ENCODE measurements at regions of chr7 and their contacts with region 1.

Region 1: GRCh38 chr7:143331179-143331820 is 15.4 kb downstream of the CLCN1 start:
- DNase-seq: peak; percentile 89
- H3K4me3 ChIP-seq: no peak overlapping the region
- H3K27ac ChIP-seq: peak overlapping the region; percentile 66
- H3K4me1 ChIP-seq: peaks cover 10% of the 10 kb centered on the region
- H3K27me3 ChIP-seq: no peaks in the 10 kb centered on the region
- CTCF ChIP-seq: no peak

Region 2: DNA sequence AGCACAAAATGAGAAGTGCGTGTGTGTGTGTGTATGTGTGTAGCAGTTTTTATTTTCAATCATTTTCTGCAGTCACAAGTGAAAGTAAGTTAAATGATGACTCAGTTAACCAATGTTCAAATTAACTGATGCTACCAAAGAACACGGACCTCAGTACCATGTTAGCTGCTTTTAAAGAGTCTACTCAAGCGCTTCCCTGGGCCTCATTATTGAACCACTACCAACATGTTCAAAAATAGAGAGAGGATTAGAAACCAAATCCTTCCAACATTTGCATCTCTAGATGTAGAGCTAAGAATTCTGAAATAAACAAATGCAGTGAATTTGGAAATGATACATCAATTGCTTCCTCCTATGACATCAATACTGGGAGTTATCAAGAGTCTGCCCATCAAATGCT is 148.3 kb before region 1 on chr7 and contains the start of gene TAS2R39:
- CTCF ChIA-PET with region 1: no interaction called
- dilution Hi-C with region 1: no loop called
- in situ Hi-C with region 1: no loop called
- intact Hi-C with region 1: no loop called
- DNase-seq: no peak
- H3K4me3 ChIP-seq: no peak within 1 kb of the TSS
- H3K27ac ChIP-seq: no peak within 1 kb of the TSS
- H3K4me1 ChIP-seq: no peaks in the 10 kb centered on the region
- H3K27me3 ChIP-seq: no peaks in the 10 kb centered on the region
- CTCF ChIP-seq: no peak
- total RNA-seq, gene TAS2R39: not detected

Region 3: GRCh38 chr7:143287935-143288826 is 43.1 kb before region 1 on chr7 and contains the start of gene CASP2:
- CTCF ChIA-PET with region 1: interaction called, 11 read pairs
- dilution Hi-C with region 1: no loop called
- in situ Hi-C with region 1: no loop called
- intact Hi-C with region 1: no loop called
- DNase-seq: peak; percentile 97
- H3K4me3 ChIP-seq: peak within 1 kb of the TSS; percentile 64 to 87 (median 78)
- H3K27ac ChIP-seq: peak within 1 kb of the TSS; percentile 86
- H3K4me1 ChIP-seq: peaks cover 41% of the 10 kb centered on the region
- H3K27me3 ChIP-seq: no peaks in the 10 kb centered on the region
- CTCF ChIP-seq: peak in 1 of 2 donors; percentile 34
- total RNA-seq, gene CASP2: 18.3 to 43.5 TPM

Region 4: GRCh38 chr7:143346018-143346417 is 14.7 kb after region 1 on chr7:
- CTCF ChIA-PET with region 1: no interaction called
- dilution Hi-C with region 1: no loop called
- in situ Hi-C with region 1: no loop called
- intact Hi-C with region 1: loop called (anchors 2 kb)
- DNase-seq: no peak
- H3K4me3 ChIP-seq: no peak overlapping the region
- H3K27ac ChIP-seq: no peak overlapping the region
- H3K4me1 ChIP-seq: peaks cover 4% of the 10 kb centered on the region
- H3K27me3 ChIP-seq: peaks cover 3% of the 10 kb centered on the region
- CTCF ChIP-seq: no peak

Region 5: DNA sequence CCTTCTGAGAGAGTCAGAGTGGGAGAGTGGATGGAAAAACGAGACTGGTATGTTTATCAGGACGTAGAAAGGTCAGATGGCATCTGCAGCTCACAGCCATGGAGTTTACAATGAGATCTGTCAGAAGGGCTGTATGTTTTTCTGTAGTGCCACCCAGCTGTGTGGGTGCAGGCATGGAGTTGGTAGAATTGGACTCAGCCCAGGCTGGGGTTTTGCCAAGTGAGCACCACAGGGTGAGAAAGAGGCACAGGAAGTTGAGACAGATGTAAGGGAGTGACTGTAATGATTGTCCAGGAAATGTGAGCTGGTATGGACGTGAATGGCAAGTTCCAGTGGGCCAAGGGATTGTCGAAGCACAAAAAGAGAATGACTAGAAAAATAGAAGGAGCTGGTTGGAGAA is 40.8 kb after region 1 on chr7:
- CTCF ChIA-PET with region 1: no interaction called
- dilution Hi-C with region 1: no loop called
- in situ Hi-C with region 1: no loop called
- intact Hi-C with region 1: loop called (anchors 5 kb)
- DNase-seq: peak; percentile 86
- H3K4me3 ChIP-seq: no peak overlapping the region
- H3K27ac ChIP-seq: no peak overlapping the region
- H3K4me1 ChIP-seq: peaks cover 41% of the 10 kb centered on the region
- H3K27me3 ChIP-seq: no peaks in the 10 kb centered on the region
- CTCF ChIP-seq: peak; percentile 20 to 66

Measured in mammary epithelial cell (primary cell).